Right ventricle myocardium superior (tissue), 1 donor: ENCODE measurements at regions of chr19 and their contacts with region 1.

Region 1: DNA sequence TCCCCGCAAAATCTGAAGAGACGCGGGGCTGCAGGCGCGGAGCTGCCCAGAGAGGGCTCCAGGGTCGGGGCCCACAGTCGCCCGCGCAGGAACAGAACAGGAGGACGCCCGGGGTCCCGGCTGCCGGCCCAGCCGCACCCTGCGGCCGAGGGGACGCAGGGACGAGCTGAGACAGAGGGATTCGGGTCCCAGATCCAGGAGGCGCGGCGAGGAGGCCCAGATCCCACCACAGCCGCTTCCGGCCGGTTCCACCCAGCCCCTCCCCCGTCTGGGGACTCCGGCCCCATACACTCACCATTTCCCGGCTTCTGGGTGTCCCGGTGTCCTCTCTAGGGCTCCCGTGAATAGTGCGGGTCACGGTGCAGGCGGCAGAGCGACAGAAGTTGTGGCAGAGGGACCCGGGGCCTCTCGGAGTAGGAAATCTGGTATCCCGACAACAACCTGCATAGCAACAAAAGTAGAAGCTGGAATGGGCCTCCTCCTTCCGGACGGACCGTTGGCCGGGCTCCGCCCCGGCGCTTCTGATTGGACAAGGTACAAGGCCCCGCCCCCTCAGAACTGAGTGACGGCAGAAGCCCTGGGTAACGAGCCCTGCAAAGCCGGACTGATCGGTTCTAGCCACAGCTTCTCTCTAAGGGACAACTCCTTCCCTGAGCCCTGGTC is at the start of gene ZNF20:
- DNase-seq: peak; percentile 97
- ATAC-seq: peak; percentile 99
- total RNA-seq, gene ZNF20: 0.97 TPM

Region 2: DNA sequence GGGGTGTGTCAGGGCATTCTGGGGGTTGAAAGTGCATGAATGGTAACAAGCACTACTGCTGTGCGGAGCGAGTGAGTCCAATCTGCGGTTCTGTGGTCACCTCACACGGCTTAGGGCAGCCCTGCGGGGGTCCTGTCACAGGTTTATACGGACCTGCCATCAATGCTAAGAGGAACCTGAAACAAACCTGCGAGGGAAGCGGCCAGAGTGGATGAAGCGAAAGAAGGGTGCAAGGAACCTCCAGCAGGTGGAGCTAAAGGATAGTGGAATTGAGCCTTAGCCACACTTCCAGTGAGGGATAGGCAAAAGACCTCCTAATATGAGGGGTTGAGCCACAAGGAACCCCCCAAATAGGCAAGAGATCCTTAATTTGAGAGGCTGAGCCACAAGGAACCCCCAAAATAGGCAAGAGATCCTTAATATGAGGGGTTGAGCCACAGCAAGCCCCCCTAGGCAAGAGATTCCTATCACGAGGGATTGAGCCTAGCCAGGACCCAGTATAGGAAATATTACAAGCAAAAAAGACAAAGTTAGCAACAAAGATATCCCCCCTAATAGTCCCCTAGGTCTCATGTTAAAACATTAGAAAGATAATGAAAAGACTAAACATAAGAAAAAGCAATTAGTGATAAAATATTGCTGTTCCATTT is 258.7 kb before region 1 on chr19:
- intact Hi-C with region 1: loop called (anchors 5 kb)
- DNase-seq: peak; percentile 47
- ATAC-seq: peak; percentile 85

Region 3: GRCh38 chr19:11924886-11925650 is 214.9 kb before region 1 on chr19 and contains the start of gene ZNF700:
- intact Hi-C with region 1: loop called (anchors 5 kb)
- DNase-seq: peak; percentile 96
- ATAC-seq: peak; percentile 99
- total RNA-seq, gene ZNF700: 4.2 TPM

Region 4: DNA sequence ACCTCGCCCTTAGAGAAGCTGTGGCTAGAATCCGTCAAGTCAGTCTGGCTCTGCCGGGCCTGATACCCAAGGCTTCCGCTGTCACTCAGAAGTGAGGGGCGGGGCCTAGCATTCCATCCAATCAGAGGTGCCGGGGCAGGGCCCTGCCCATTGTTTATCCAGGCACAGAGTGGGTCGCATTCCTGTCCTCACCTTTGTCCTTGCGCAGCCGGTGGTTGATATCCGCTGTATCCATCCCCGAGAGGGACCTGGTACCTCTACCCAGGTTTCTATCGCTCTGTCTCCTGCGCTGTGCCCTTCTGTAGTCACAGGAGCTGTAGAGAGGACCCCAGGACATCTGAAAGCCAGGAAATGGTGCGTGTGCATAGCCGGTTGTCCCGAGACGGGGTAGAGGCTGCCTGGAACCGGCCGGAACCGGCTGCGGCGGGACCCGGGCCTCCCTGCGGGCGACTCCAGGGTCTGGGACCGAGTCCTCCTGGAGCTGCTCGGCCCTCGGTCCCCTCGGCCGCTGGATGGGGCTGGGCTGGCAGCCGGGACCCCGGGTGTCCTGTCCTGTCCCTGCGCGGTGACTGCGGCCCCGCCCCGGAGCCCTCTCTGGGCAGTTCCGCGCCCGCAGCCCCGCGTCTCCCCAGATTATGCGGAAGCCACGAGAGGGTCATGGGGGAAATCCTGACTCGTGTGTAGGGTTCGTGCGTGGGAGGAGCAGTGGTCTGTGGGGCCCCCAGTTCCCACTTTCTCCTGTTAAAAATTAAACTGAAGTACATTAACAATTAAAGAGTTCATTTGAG is 175.0 kb before region 1 on chr19 and contains the start of gene ZNF763:
- intact Hi-C with region 1: loop called (anchors 10 kb)
- DNase-seq: peak; percentile 97
- ATAC-seq: peak; percentile 100
- total RNA-seq, gene ZNF763: 3.7 TPM

Region 5: GRCh38 chr19:12055783-12056182 is 84.2 kb before region 1 on chr19:
- intact Hi-C with region 1: loop called (anchors 2 kb)
- DNase-seq: no peak
- ATAC-seq: no peak

Region 6: DNA sequence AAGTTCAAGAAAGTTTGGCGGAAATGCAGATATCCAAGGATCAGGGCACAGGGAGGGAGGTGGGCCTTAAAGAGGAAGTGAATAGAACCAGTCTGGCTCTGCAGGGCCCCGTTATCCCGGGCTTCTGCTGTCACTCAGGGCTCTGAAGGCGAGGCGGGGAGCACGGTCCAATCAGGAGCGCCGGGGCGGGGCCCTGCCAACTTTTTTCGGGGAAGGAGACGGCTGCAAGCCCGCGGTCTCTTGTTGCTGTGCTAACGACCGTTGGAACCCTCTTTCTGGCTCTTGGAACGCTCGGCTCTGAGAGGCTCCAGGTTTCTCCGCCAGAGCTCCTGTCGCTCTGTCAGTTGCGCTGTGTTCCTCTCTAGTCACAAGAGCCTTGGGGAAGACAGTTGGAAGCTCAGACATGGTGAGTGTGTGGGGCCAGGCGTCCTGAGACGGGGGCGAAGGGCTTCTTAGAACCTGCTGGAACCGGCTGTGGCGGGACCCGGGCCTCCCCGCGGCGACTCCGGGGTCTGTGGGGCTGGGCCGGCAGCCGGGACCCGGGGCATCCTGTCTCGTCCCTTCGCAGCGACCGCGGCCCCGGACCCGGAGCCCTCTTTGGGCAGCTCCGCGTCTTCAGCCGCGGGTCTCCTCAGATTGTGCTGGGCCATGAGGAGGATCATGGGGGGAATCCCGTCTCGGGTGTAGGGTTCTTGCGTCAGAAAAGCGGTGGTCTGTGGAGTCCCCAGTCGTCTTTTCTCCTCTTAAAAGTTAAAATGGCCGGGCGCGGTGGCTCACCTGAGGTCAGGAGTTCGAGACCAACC is 47.8 kb before region 1 on chr19:
- intact Hi-C with region 1: loop called (anchors 10 kb)
- DNase-seq: peak; percentile 93
- ATAC-seq: peak; percentile 98